Activated CD4-positive, alpha-beta memory T cell treated with anti-CD3 and anti-CD28 coated beads, Interleukin-2, amount 10 ng/mL, durations not matched to agents 7 days and 5 days (primary cell): ENCODE measurements at regions of chr1 and their contacts with region 1.

Region 1: DNA sequence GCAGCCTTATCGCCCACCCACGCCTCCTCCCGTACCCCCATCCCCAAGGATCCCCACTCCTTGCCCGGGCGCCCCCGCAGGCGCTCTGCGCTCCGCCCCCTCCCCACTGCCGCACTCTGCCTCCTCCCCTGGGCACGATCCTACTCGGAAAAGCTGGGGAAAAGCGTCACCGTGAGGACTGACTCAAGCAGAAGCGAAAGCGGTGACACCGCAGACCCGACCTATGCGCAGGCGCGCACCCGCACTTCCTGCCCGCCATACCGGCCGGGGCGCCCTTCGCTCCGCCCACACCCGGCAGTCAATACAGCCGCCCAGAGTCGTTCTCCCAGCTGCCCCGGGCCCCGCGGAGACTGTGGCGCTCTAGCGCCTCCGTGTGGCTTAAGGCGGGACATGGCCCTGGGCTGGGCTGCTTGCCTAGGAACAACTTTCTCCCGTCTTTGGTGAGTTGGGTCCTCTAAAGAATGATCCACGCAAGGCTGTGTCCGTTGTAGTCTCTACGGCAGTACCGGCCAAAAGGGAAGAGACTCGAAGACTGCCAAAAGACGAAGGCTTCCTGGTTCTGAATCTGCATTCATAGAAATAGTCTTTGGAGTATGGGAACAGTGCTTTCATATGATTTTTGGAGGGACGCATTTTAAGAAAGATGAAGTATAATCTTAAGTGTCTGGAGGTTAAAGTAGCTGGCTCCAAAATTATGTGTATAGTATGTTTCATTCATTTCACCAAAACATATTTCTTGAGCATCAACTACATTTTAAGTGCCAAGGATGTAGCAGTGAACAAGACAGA is at the start of gene OMA1:
- DNase-seq: peak; percentile 98
- H3K4me3 Mint-ChIP-seq: peak within 1 kb of the TSS; percentile 90
- H3K27ac Mint-ChIP-seq: peak within 1 kb of the TSS; percentile 92
- H3K4me1 Mint-ChIP-seq: peaks cover 19% of the 10 kb centered on the region
- H3K27me3 Mint-ChIP-seq: peaks cover 17% of the 10 kb centered on the region
- total RNA-seq, gene OMA1: 21.9 to 23.1 TPM

Region 2: GRCh38 chr1:58515794-58516401 is 30.8 kb before region 1 on chr1:
- CTCF ChIA-PET with region 1: interaction called, 51 read pairs
- POLR2A ChIA-PET with region 1: interaction called, 23 read pairs
- DNase-seq: no peak
- H3K4me3 Mint-ChIP-seq: no peak overlapping the region
- H3K27ac Mint-ChIP-seq: no peak overlapping the region
- H3K4me1 Mint-ChIP-seq: peaks cover 13% of the 10 kb centered on the region
- H3K27me3 Mint-ChIP-seq: no peaks in the 10 kb centered on the region

Region 3: GRCh38 chr1:58524353-58524945 is 22.3 kb before region 1 on chr1:
- CTCF ChIA-PET with region 1: interaction called, 6 read pairs
- POLR2A ChIA-PET with region 1: interaction called, 11 read pairs
- DNase-seq: no peak
- H3K4me3 Mint-ChIP-seq: no peak overlapping the region
- H3K27ac Mint-ChIP-seq: peak overlapping the region; percentile 1
- H3K4me1 Mint-ChIP-seq: peaks cover 19% of the 10 kb centered on the region
- H3K27me3 Mint-ChIP-seq: no peaks in the 10 kb centered on the region